PC-9 (cell line): ENCODE measurements at regions of chr12 and their contacts with region 1.

Region 1: GRCh38 chr12:47397664-47398281 is 308.1 kb downstream of the RPAP3 start:
- DNase-seq: peak; percentile 57 to 78
- H3K4me3 ChIP-seq: no peak overlapping the region
- H3K27ac ChIP-seq: peak overlapping the region; percentile 25; the same call in 1 of the 2 replicates
- H3K4me1 ChIP-seq: peaks cover 17% of the 10 kb centered on the region
- H3K27me3 ChIP-seq: no peaks in the 10 kb centered on the region
- CTCF ChIP-seq: peak; percentile 77

Region 2: GRCh38 chr12:46915082-46915481 is 482.7 kb before region 1 on chr12:
- CTCF ChIA-PET with region 1: no interaction called
- POLR2A ChIA-PET with region 1: no interaction called
- intact Hi-C with region 1: no loop called
- DNase-seq: peak in 1 of 2 experiments; percentile 23
- H3K4me3 ChIP-seq: no peak overlapping the region
- H3K27ac ChIP-seq: no peak overlapping the region
- H3K4me1 ChIP-seq: no peaks in the 10 kb centered on the region
- H3K27me3 ChIP-seq: no peaks in the 10 kb centered on the region
- CTCF ChIP-seq: no peak

Region 3: GRCh38 chr12:47166365-47166764 is 231.4 kb before region 1 on chr12:
- CTCF ChIA-PET with region 1: no interaction called
- POLR2A ChIA-PET with region 1: no interaction called
- intact Hi-C with region 1: no loop called
- DNase-seq: no peak
- H3K4me3 ChIP-seq: no peak overlapping the region
- H3K27ac ChIP-seq: no peak overlapping the region
- H3K4me1 ChIP-seq: 0 out of 2 replicates have a peak, but pooled peaks cover 3% of the 10 kb centered on the region
- H3K27me3 ChIP-seq: no peaks in the 10 kb centered on the region
- CTCF ChIP-seq: no peak

Region 4: DNA sequence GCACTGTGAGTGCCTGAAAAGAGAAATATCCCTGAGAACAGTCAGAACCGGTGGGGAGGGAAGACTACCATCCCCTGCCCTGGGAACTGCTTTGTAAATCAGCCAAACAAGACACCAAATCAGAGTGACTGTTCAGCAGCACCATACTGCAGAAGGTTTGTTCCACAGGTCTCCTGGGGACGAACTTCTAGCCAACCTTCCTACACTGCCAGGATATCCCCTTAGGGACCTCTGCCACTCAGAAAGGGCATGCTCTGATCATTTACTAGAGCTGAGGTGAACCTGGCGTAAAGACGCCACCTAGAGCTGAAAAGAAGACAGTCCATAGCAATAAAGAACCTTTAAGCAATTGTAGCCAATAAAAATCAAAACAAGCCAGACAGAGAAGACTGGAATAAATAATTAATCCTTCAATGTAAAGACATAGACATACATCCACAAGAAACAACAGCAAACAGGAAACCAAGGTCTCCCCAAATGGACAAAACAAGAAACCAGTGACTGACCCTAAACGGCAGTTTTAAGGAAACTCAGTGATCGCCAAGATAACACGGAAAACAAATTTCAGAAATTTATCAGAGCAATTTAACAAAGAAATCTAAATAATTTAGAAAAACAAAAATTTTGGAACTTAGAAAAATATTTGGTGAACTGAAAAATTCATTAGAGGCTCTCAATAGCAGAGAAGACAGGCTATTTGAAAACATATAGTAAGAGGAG is 89.9 kb before region 1 on chr12:
- CTCF ChIA-PET with region 1: interaction called, 3 read pairs
- POLR2A ChIA-PET with region 1: no interaction called
- intact Hi-C with region 1: loop called (anchors 1 kb)
- DNase-seq: peak; percentile 55 to 56
- H3K4me3 ChIP-seq: no peak overlapping the region
- H3K27ac ChIP-seq: peak overlapping the region; percentile 24
- H3K4me1 ChIP-seq: peaks cover 5% of the 10 kb centered on the region; the same call in 1 of the 2 replicates
- H3K27me3 ChIP-seq: no peaks in the 10 kb centered on the region
- CTCF ChIP-seq: peak; percentile 74